AG04450 (cell line): ENCODE measurements at regions of chr9 and their contacts with region 1.

Region 1: DNA sequence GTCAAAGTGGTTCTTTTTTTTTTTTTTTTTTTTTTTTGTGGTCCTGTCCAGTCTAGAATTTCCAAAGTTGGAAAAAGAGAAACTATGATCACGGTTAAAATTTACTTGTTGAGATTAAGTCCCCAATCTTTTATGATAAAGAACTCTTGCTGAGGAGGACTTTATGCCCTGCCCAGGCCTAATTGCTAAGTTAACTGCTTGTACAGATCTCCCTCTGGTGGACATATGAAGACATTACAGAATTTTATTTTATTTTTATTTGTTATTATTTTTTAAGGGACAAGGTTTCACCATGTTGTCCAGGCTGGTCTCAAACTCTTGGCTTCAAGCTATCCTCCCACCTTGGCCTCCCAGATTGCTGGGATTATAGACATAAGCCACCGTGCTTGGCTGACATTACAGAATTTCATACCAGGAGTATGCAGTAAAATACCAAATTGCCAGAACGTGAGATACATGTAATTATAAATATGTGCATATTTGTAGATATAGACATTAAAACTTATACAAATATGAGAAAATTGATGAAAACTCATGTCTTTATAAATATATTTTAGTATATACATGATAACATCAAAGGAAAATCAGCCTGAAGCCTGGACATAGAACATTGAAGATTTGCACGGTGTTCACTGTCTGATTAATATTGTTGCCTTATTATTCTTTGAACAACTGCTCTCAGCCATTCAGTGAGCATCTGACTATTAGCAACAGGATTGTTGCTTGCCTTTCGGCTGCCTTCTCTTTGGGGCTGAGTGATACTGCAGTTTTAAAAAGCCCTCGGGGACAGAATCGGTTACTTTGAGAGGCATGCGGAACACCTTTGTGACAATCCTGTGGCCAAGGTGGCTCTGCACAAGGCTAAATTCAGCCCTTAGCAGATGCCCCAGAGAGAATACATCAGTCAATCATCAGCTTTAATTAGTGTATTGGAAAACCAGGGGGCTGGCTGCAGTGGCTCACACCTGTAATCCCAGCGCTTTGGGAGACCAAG is 91.0 kb downstream of the RFK start:
- DNase-seq: peak; percentile 39
- H3K4me3 ChIP-seq: no peak overlapping the region
- H3K27ac ChIP-seq: no peak overlapping the region
- H3K27me3 ChIP-seq: no peaks in the 10 kb centered on the region
- CTCF ChIP-seq: peak; percentile 67

Region 2: DNA sequence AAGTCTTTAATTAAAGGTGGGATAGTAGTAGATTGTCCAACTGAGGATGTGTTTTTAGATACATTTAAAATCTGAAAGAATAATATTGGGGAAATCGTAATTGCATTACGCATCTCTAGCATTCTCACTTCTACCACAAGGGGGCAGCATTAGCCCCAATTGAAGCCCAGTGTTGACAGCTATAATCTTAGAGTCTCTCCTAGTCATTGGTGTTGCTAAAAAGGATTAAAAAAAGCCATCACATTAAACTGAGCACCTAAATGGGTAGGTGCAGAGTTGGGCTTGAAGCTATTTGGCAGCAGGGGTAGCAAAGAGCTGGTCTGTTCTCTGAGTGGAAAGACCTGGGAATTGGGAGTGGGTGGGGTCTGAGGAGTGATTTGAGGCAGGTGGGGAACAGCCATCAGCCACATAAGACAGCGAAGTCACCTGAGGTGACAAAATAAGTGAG is 1037.7 kb before region 1 on chr9:
- CTCF ChIA-PET with region 1: interaction called, 14 read pairs
- POLR2A ChIA-PET with region 1: no interaction called
- DNase-seq: no peak
- H3K4me3 ChIP-seq: no peak overlapping the region
- H3K27ac ChIP-seq: no peak overlapping the region
- H3K27me3 ChIP-seq: no peaks in the 10 kb centered on the region
- CTCF ChIP-seq: peak; percentile 84

Region 3: GRCh38 chr9:75890472-75891276 is 412.6 kb before region 1 on chr9 and contains the start of gene PCSK5:
- CTCF ChIA-PET with region 1: interaction called, 15 read pairs
- POLR2A ChIA-PET with region 1: interaction called, 3 read pairs
- DNase-seq: peak; percentile 73
- H3K4me3 ChIP-seq: peak within 1 kb of the TSS; percentile 71
- H3K27ac ChIP-seq: no peak within 1 kb of the TSS
- H3K27me3 ChIP-seq: peaks cover 24% of the 10 kb centered on the region
- CTCF ChIP-seq: peak; percentile 35
- polyA plus RNA-seq, gene PCSK5: 1.4 and 1.6 TPM in 2 replicates

Region 4: DNA sequence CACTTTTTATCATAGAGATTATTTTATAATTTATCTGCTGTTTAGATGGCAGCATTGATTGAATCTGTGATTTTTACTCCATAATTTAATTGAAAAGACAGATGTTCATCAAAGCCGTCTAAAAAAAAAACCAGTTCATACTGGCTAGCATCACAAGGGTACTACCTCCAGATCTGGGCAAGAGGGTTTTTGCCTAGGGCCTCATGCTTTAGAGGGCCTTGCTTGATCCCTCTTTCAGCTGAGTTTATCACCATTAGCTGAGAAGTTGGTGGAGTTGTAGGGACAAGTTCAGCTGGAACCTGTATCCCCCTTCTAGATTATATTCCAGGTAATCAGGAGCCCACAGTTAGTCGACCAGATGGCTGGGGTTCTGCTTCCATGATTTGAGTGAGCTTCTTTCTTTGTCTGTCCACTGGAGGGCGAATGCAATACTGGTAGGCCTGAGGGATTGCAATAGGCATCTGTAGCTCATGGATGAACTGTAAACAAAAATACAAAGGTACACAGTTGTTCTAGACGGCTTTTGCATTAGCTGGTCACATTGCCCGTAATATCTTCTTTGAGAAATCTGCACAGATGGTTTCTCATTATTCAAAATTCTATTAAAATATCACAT is 324.0 kb before region 1 on chr9:
- CTCF ChIA-PET with region 1: interaction called, 26 read pairs
- POLR2A ChIA-PET with region 1: no interaction called
- DNase-seq: no peak
- H3K4me3 ChIP-seq: no peak overlapping the region
- H3K27ac ChIP-seq: no peak overlapping the region
- H3K27me3 ChIP-seq: no peaks in the 10 kb centered on the region
- CTCF ChIP-seq: peak; percentile 46

Region 5: GRCh38 chr9:76086539-76086938 is 216.7 kb before region 1 on chr9:
- CTCF ChIA-PET with region 1: interaction called, 15 read pairs
- POLR2A ChIA-PET with region 1: no interaction called
- DNase-seq: no peak
- H3K4me3 ChIP-seq: no peak overlapping the region
- H3K27ac ChIP-seq: no peak overlapping the region
- H3K27me3 ChIP-seq: no peaks in the 10 kb centered on the region
- CTCF ChIP-seq: no peak

Region 6: DNA sequence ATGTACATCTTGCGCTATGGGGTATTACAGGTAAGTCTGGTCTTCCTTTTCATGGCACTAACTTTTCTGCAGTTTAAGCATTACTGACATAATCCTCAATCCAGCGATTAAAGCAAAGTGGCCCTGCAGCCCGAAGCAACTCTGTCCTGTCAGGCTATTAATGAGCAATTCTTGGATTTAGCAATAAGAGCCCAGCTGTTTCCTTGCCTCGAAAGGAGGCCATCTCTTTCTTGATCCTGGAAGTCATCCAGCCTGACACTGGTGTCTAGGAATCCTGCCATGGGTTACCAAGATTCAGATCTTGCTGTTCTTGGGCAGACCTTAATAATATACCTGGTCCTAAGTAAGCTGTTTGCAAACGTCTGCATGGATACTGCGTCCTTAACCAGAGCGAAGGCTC is 11.0 kb before region 1 on chr9:
- CTCF ChIA-PET with region 1: interaction called, 57 read pairs
- POLR2A ChIA-PET with region 1: no interaction called
- DNase-seq: no peak
- H3K4me3 ChIP-seq: no peak overlapping the region
- H3K27ac ChIP-seq: no peak overlapping the region
- H3K27me3 ChIP-seq: peaks cover 3% of the 10 kb centered on the region
- CTCF ChIP-seq: no peak